CD4-positive, alpha-beta T cell (primary cell): ENCODE measurements at regions of chr5 and their contacts with region 1.

Region 1: GRCh38 chr5:98928873-98929696 is at the start of gene CHD1:
- DNase-seq: peak; percentile 89 to 99 (median 94)
- ATAC-seq: peak; percentile 50
- H3K4me3 ChIP-seq: peak within 1 kb of the TSS; percentile 97
- H3K4me3 Mint-ChIP-seq: peak within 1 kb of the TSS; percentile 99
- H3K27ac ChIP-seq: peak within 1 kb of the TSS; percentile 100
- H3K27ac Mint-ChIP-seq: peak within 1 kb of the TSS; percentile 97
- H3K4me1 ChIP-seq: peaks cover 23% of the 10 kb centered on the region
- H3K4me1 Mint-ChIP-seq: peaks cover 68% of the 10 kb centered on the region
- H3K27me3 ChIP-seq: no peaks in the 10 kb centered on the region
- H3K27me3 Mint-ChIP-seq: no peaks in the 10 kb centered on the region
- CTCF ChIP-seq: no peak
- total RNA-seq, gene CHD1: 217 to 228 TPM

Region 2: DNA sequence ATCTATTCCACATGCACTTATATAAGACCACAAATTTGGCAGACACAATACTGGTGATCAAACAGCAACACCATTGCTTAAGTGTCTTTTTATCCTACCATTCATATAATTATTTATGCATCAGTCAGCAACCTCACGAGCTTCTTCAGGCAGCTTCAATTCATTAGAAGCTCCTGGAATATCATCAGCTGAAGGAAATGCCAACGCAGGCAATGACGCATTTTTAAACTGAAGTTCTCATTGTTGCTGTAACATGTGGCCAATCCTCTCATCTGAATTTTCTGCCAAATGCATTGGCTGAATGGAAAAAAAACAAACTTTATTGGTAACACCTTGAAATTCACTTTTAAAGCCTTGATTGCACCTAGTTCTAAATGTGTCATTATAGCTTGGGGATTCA is 532.0 kb before region 1 on chr5:
- CTCF ChIA-PET with region 1: no interaction called
- POLR2A ChIA-PET with region 1: no interaction called
- intact Hi-C with region 1: no loop called
- DNase-seq: no peak
- ATAC-seq: no peak
- H3K4me3 ChIP-seq: no peak overlapping the region
- H3K4me3 Mint-ChIP-seq: no peak overlapping the region
- H3K27ac ChIP-seq: no peak overlapping the region
- H3K27ac Mint-ChIP-seq: no peak overlapping the region
- H3K4me1 ChIP-seq: no peaks in the 10 kb centered on the region
- H3K4me1 Mint-ChIP-seq: no peaks in the 10 kb centered on the region
- H3K27me3 ChIP-seq: no peaks in the 10 kb centered on the region
- H3K27me3 Mint-ChIP-seq: no peaks in the 10 kb centered on the region
- CTCF ChIP-seq: no peak

Region 3: GRCh38 chr5:98713027-98713426 is 216.1 kb before region 1 on chr5:
- CTCF ChIA-PET with region 1: no interaction called
- POLR2A ChIA-PET with region 1: no interaction called
- intact Hi-C with region 1: no loop called
- DNase-seq: no peak
- ATAC-seq: no peak
- H3K4me3 ChIP-seq: no peak overlapping the region
- H3K4me3 Mint-ChIP-seq: no peak overlapping the region
- H3K27ac ChIP-seq: no peak overlapping the region
- H3K27ac Mint-ChIP-seq: no peak overlapping the region
- H3K4me1 ChIP-seq: no peaks in the 10 kb centered on the region
- H3K4me1 Mint-ChIP-seq: no peaks in the 10 kb centered on the region
- H3K27me3 ChIP-seq: no peaks in the 10 kb centered on the region
- H3K27me3 Mint-ChIP-seq: peaks cover 21% of the 10 kb centered on the region
- CTCF ChIP-seq: no peak

Region 4: GRCh38 chr5:98905857-98906690 is 23.0 kb before region 1 on chr5:
- CTCF ChIA-PET with region 1: no interaction called
- POLR2A ChIA-PET with region 1: interaction called, 41 read pairs
- intact Hi-C with region 1: loop called (anchors 2 kb)
- DNase-seq: peak in 3 of 14 experiments; percentile 74 to 76 (median 75)
- ATAC-seq: peak; percentile 68
- H3K4me3 ChIP-seq: no peak overlapping the region
- H3K4me3 Mint-ChIP-seq: no peak overlapping the region
- H3K27ac ChIP-seq: no peak overlapping the region
- H3K27ac Mint-ChIP-seq: peak overlapping the region; percentile 13
- H3K4me1 ChIP-seq: peaks cover 2% of the 10 kb centered on the region
- H3K4me1 Mint-ChIP-seq: peaks cover 46% of the 10 kb centered on the region
- H3K27me3 ChIP-seq: no peaks in the 10 kb centered on the region
- H3K27me3 Mint-ChIP-seq: no peaks in the 10 kb centered on the region
- CTCF ChIP-seq: peak; percentile 88

Region 5: DNA sequence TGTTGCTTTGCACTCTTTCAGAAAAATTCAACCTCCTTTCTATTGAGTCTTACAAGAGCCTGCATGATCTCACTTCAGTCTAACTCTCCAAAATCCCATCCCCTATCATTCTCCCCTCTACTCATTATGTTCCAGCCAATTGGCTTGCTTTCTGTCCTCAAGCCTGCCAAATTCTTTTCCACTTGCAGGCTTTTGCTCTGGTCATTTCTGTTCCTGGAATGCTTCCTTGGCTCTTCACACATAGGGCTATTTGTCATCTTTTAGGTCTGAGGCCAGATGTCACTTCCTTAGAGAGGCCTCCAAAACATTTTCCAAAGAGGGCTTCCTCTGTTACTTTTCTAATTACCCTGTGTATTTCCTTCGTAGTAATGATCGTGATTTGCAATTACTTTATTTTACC is 11.5 kb after region 1 on chr5:
- CTCF ChIA-PET with region 1: interaction called, 4 read pairs
- POLR2A ChIA-PET with region 1: interaction called, 22 read pairs
- intact Hi-C with region 1: no loop called
- DNase-seq: no peak
- ATAC-seq: no peak
- H3K4me3 ChIP-seq: no peak overlapping the region
- H3K4me3 Mint-ChIP-seq: no peak overlapping the region
- H3K27ac ChIP-seq: no peak overlapping the region
- H3K27ac Mint-ChIP-seq: peak overlapping the region; percentile 97
- H3K4me1 ChIP-seq: no peaks in the 10 kb centered on the region
- H3K4me1 Mint-ChIP-seq: peaks cover 70% of the 10 kb centered on the region
- H3K27me3 ChIP-seq: no peaks in the 10 kb centered on the region
- H3K27me3 Mint-ChIP-seq: no peaks in the 10 kb centered on the region
- CTCF ChIP-seq: no peak

Region 6: DNA sequence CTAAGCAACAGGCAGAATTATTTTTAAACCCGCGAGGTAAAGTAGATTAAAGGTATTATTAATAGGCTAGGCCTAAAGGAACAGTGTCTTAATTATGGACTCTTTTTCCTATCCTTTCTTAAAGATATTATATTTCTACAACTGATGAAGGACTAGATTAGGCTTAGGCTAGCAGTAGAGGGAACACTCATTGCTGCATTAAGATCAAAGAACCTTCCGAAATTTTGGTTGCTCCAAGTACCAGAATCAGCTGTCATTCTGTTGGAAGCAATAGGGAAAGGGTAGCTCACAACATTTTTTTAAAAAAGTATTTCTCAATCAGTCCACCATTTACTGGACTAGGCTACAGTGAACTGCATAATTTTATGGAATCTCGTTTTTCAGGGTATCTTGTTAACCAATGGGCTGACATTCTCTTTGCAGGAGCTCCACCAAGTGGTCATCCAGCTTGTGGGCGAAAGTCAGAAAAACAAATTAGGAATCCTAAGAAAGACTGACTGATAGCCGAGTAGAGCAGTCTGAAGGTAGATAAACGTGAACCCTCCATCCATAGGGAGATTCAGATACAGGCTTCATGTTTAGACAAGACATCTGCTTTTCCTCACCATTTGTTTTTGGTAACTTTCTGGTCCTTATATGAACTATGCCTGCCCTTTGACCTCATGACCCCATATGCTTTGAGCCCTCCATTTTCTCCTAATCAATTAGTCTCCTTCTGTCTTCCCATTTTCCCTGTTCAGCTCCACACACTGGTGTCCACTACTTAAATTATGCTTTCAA is 103.3 kb after region 1 on chr5:
- CTCF ChIA-PET with region 1: no interaction called
- POLR2A ChIA-PET with region 1: interaction called, 109 read pairs
- intact Hi-C with region 1: loop called (anchors 2 to 5 kb)
- DNase-seq: peak in 9 of 14 experiments; percentile 5 to 67 (median 21)
- ATAC-seq: peak; percentile 25
- H3K4me3 ChIP-seq: peak overlapping the region; percentile 56
- H3K4me3 Mint-ChIP-seq: peak overlapping the region; percentile 90
- H3K27ac ChIP-seq: peak overlapping the region; percentile 29 to 91
- H3K27ac Mint-ChIP-seq: peak overlapping the region; percentile 94
- H3K4me1 ChIP-seq: peaks cover 25% of the 10 kb centered on the region
- H3K4me1 Mint-ChIP-seq: peaks cover 78% of the 10 kb centered on the region
- H3K27me3 ChIP-seq: no peaks in the 10 kb centered on the region
- H3K27me3 Mint-ChIP-seq: no peaks in the 10 kb centered on the region
- CTCF ChIP-seq: peak; percentile 53

Region 7: DNA sequence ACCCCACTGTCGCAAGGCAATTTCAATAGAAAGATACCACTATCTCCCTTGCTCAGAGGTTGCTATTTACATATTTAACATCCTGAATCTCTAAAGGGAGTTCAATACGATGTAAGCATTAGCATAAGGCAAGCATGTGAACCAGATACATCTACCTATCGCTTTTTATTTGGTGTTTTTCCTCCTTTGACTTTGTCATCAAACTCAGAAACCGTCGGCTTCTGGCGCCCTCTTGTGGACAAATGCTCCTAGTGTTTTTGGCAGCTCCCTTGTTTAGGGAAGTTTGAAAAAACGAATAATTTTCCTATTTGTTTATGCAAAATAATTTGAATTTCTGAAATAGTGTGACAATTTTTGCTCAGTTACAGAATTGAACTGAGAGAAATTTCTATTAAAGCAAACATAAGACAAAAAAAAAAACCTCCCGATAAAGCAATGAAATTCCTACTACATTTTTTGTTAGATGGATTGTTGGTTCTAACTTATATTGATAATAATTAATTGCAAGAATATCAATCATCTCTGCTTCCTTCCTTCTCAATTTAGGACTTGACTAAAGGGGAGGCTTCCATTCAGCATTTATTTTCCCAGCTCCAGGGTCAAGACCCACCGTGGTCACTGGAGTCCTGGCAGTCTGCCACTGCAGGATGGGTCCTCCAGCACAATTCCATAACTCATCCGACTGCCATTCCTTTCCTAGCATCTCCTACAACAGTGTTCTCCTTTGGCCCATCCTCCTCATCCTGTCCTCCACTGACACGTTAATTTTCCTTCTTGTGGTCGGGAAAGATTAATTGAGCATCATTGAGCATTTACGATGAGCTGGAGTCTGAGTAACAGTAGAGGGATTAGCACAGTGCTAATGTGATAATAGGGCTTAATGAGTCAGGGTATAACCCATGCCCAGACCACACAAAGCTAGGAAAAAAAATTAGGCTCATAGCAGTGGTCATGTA is 131.5 kb after region 1 on chr5:
- CTCF ChIA-PET with region 1: interaction called, 4 read pairs
- POLR2A ChIA-PET with region 1: interaction called, 57 read pairs
- intact Hi-C with region 1: no loop called
- DNase-seq: peak; percentile 78 to 92 (median 87)
- ATAC-seq: peak; percentile 78
- H3K4me3 ChIP-seq: no peak overlapping the region
- H3K4me3 Mint-ChIP-seq: peak overlapping the region; percentile 23
- H3K27ac ChIP-seq: no peak overlapping the region
- H3K27ac Mint-ChIP-seq: no peak overlapping the region
- H3K4me1 ChIP-seq: no peaks in the 10 kb centered on the region
- H3K4me1 Mint-ChIP-seq: peaks cover 15% of the 10 kb centered on the region
- H3K27me3 ChIP-seq: no peaks in the 10 kb centered on the region
- H3K27me3 Mint-ChIP-seq: peaks cover 7% of the 10 kb centered on the region
- CTCF ChIP-seq: peak; percentile 92

Region 8: DNA sequence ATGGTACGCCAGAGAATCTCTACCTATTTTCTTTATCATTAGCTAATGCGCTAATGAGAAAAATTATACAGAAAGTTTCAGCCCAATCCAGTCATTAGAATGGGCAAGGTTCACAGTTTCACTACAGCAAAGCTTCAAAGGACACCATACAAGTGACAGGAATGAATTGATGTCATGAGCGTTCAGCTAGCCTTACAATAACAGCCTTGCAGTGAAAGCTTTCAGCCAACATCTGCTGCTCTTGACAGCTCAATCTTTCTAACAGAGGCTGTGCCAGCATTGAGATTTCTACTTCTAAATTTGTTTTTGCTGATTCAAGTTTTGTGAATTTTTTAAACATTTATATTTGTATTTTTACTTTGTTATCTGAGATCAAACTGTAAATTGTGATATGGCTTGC is 1303.7 kb after region 1 on chr5:
- CTCF ChIA-PET with region 1: no interaction called
- POLR2A ChIA-PET with region 1: no interaction called
- intact Hi-C with region 1: no loop called
- DNase-seq: no peak
- ATAC-seq: no peak
- H3K4me3 ChIP-seq: no peak overlapping the region
- H3K4me3 Mint-ChIP-seq: no peak overlapping the region
- H3K27ac ChIP-seq: no peak overlapping the region
- H3K27ac Mint-ChIP-seq: no peak overlapping the region
- H3K4me1 ChIP-seq: no peaks in the 10 kb centered on the region
- H3K4me1 Mint-ChIP-seq: no peaks in the 10 kb centered on the region
- H3K27me3 ChIP-seq: no peaks in the 10 kb centered on the region
- H3K27me3 Mint-ChIP-seq: no peaks in the 10 kb centered on the region
- CTCF ChIP-seq: no peak

Region 9: GRCh38 chr5:100903039-100903887 is 1974.2 kb after region 1 on chr5 and contains the start of gene ST8SIA4:
- CTCF ChIA-PET with region 1: no interaction called
- POLR2A ChIA-PET with region 1: interaction called, 39 read pairs
- intact Hi-C with region 1: loop called in 1 of 2 experiments (anchors 5 kb)
- DNase-seq: peak; percentile 80 to 96 (median 88)
- ATAC-seq: peak; percentile 73
- H3K4me3 ChIP-seq: peak within 1 kb of the TSS; percentile 92
- H3K4me3 Mint-ChIP-seq: peak within 1 kb of the TSS; percentile 92
- H3K27ac ChIP-seq: peak within 1 kb of the TSS; percentile 83 to 96
- H3K27ac Mint-ChIP-seq: peak within 1 kb of the TSS; percentile 93
- H3K4me1 ChIP-seq: peaks cover 28% of the 10 kb centered on the region
- H3K4me1 Mint-ChIP-seq: peaks cover 53% of the 10 kb centered on the region
- H3K27me3 ChIP-seq: no peaks in the 10 kb centered on the region
- H3K27me3 Mint-ChIP-seq: no peaks in the 10 kb centered on the region
- CTCF ChIP-seq: no peak
- total RNA-seq, gene ST8SIA4: 17.8 to 19.5 TPM